ENCODE measurements at regions of chr6 and their contacts with region 1.

Region 1: GRCh38 chr6:150417899-150418826 is 49.4 kb downstream of the IYD start:
- DNase-seq: peak; percentile 72

Region 2: GRCh38 chr6:150813319-150813992 is 395.3 kb after region 1 on chr6:
- in situ Hi-C with region 1: loop called (anchors 25 kb)
- DNase-seq: no peak